H1 (cell line): ENCODE measurements at regions of chr2 and their contacts with region 1.

Region 1: GRCh38 chr2:197851451-197851850 is 47.1 kb downstream of the PLCL1 start:
- DNase-seq: no peak
- H3K4me3 ChIP-seq: no peak overlapping the region
- H3K27ac ChIP-seq: no peak overlapping the region
- H3K4me1 ChIP-seq: no peaks in the 10 kb centered on the region
- H3K27me3 ChIP-seq: no peaks in the 10 kb centered on the region
- CTCF ChIP-seq: peak in 2 of 3 experiments; percentile 48 to 64; a peak in 3 of 4 replicates
- EP300 ChIP-seq: no peak
- POLR2A ChIP-seq: no peak
- RAD21 ChIP-seq: peak; percentile 79 to 83

Region 2: DNA sequence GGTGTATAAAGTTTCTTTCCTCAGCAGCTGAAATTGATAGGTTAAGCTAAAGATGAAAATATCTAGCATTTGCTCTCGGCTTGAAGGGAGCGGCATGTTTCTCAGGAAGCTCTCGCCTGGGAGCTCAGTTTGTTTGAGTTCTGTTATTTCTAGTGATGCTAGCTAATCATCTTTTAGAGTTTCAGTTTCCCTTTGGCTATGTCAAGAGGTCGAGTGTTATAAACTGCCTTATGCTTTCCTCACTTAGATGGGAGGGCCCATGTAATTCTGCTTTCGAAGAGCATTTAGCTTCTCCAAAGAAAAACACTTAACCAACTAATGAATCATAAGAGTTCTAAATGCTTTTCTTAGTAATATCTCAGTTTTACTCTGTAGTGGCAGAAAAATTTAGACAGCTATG is 13.4 kb before region 1 on chr2:
- CTCF ChIA-PET with region 1: interaction called, 10 read pairs
- POLR2A ChIA-PET with region 1: no interaction called
- DNase-seq: no peak
- H3K4me3 ChIP-seq: no peak overlapping the region
- H3K27ac ChIP-seq: no peak overlapping the region
- H3K4me1 ChIP-seq: no peaks in the 10 kb centered on the region
- H3K27me3 ChIP-seq: no peaks in the 10 kb centered on the region
- CTCF ChIP-seq: no peak
- EP300 ChIP-seq: no peak
- POLR2A ChIP-seq: no peak
- RAD21 ChIP-seq: no peak

Region 3: DNA sequence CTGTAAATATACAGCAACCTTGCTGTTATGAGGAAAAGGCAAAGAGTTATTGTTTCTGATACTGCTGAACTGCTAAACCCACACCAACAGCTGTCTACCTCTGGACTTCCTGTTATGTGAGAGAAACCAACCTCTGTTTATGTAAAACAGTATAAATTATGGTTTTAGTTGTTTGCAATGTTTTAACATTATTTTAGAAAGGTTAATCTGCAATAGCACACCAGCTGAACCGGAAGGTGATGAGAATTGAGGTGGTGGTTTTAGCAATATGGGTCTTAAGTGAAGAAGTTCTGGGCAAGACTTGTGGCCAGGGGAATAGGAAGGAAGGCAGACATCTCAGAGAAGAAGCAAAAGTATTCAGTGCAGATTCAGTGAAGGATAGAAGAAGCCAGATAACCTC is 190.7 kb after region 1 on chr2:
- CTCF ChIA-PET with region 1: interaction called, 13 read pairs
- POLR2A ChIA-PET with region 1: no interaction called
- DNase-seq: no peak
- H3K4me3 ChIP-seq: no peak overlapping the region
- H3K27ac ChIP-seq: no peak overlapping the region
- H3K4me1 ChIP-seq: no peaks in the 10 kb centered on the region; a peak in 1 of 7 replicates
- H3K27me3 ChIP-seq: no peaks in the 10 kb centered on the region
- CTCF ChIP-seq: no peak
- EP300 ChIP-seq: no peak
- POLR2A ChIP-seq: no peak
- RAD21 ChIP-seq: no peak

Region 4: GRCh38 chr2:198127627-198128026 is 276.2 kb after region 1 on chr2:
- CTCF ChIA-PET with region 1: interaction called, 34 read pairs
- POLR2A ChIA-PET with region 1: no interaction called
- DNase-seq: no peak
- H3K4me3 ChIP-seq: no peak overlapping the region
- H3K27ac ChIP-seq: no peak overlapping the region
- H3K4me1 ChIP-seq: no peaks in the 10 kb centered on the region
- H3K27me3 ChIP-seq: no peaks in the 10 kb centered on the region
- CTCF ChIP-seq: peak; percentile 29 to 77 (median 61)
- EP300 ChIP-seq: no peak
- POLR2A ChIP-seq: no peak
- RAD21 ChIP-seq: peak; percentile 92 to 93